ENCODE measurements at regions of chr6 and their contacts with region 1.

Region 1: DNA sequence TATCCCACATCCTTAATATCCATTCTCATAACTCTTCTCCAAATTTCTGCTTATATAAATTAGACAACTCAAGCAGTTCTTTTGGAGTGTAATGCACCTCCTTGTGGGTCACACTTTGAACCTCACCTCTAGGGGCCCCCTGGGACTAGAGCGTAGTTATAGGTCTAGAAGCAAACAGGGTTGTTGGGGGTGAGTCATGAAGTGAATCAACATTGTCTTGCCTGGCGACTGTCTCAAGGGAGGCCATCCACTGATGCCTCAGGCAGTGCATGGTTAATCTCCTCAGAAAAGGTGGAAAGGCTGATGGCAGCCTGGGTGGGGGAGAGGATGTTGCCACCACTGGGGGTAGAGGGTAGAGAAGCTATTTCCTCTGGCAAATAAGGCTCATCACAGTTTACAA is 129.1 kb downstream of the TNFRSF21 start:
- DNase-seq: peak; percentile 88
- H3K4me3 ChIP-seq: no peak overlapping the region
- H3K27ac ChIP-seq: peak overlapping the region; percentile 37
- H3K4me1 ChIP-seq: peaks cover 24% of the 10 kb centered on the region
- H3K27me3 ChIP-seq: no peaks in the 10 kb centered on the region
- CTCF ChIP-seq: peak; percentile 15 to 41

Region 2: DNA sequence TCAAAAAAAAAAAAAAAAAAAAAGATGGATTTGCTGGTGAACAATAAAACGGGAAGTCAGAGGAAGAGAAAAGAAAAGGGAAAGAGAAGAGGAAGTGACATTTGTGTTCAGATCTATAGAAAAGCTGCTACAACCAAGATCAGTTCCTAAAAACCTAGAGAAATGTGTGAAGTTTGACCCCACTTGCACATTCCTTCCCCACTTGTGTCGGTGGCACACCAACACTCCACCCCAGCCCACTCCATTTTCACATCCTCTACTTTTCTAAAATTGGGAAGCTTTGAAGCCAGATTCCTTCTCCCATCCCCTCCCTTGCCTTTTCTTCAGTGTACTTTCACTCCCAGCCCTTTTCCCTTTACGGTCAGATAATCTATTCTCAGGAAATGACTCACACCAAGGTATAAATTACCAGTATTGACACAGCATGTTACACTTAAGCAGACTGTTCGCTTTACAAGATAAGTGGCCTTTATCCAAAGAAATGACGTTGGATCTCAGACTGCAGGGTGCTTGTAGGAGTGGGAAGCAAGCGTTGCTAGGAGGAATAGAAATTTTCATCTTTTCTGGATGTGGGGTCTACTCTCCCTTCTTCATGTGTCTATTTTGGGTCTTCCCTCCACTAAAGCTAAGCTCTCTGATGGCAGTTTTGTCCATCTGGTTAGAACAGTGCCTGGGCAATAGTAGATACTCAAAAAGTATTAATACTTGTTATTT is 46.0 kb before region 1 on chr6:
- CTCF ChIA-PET with region 1: no interaction called
- dilution Hi-C with region 1: no loop called
- in situ Hi-C with region 1: no loop called
- intact Hi-C with region 1: loop called (anchors 2 kb)
- DNase-seq: peak; percentile 94
- H3K4me3 ChIP-seq: peak overlapping the region in 1 of 3 experiments; percentile 18
- H3K27ac ChIP-seq: peak overlapping the region; percentile 98
- H3K4me1 ChIP-seq: peaks cover 29% of the 10 kb centered on the region
- H3K27me3 ChIP-seq: no peaks in the 10 kb centered on the region
- CTCF ChIP-seq: no peak

Measured in mammary epithelial cell (primary cell).